Mammary epithelial cell (primary cell): ENCODE measurements at regions of chr1 and their contacts with region 1.

Region 1: GRCh38 chr1:230642263-230642959 is at the start of gene COG2:
- DNase-seq: peak; percentile 89
- H3K4me3 ChIP-seq: peak within 1 kb of the TSS; percentile 57 to 94 (median 68)
- H3K27ac ChIP-seq: peak within 1 kb of the TSS; percentile 42
- H3K4me1 ChIP-seq: peaks cover 16% of the 10 kb centered on the region
- H3K27me3 ChIP-seq: no peaks in the 10 kb centered on the region
- CTCF ChIP-seq: peak; percentile 94 to 97
- total RNA-seq, gene COG2: 16.7 to 17.7 TPM

Region 2: DNA sequence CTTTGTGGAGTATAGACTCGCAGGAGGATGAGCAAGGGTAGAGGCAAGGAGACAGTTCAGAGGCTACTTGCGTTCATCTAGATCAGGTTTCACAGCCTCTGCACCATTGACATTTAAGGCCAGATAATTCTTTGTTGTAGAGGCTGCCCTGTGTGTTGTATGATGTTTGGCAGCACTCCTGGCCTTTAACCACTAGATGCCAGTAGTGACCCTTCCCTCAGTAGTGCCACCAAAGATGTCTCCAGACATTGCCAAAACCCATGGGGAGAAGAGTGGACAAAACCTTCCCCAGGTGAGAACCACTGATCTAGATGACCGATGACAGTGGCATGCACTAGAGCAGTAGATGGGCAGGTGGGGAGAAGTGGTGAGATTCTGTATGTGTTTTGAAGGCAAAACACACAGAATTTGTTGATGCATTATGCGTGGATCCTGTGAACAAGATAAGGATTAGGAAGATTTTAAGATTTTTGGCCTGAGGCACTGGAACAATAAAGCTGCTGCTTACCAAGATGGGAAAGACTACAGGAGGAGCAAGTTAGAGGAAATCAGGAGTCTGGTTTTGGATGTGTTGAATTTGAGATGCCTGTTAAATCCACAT is 10.0 kb before region 1 on chr1:
- CTCF ChIA-PET with region 1: interaction called, 18 read pairs
- dilution Hi-C with region 1: no loop called
- in situ Hi-C with region 1: no loop called
- intact Hi-C with region 1: no loop called
- DNase-seq: peak; percentile 39
- H3K4me3 ChIP-seq: no peak overlapping the region
- H3K27ac ChIP-seq: no peak overlapping the region
- H3K4me1 ChIP-seq: peaks cover 16% of the 10 kb centered on the region
- H3K27me3 ChIP-seq: no peaks in the 10 kb centered on the region
- CTCF ChIP-seq: peak; percentile 68 to 85

Region 3: DNA sequence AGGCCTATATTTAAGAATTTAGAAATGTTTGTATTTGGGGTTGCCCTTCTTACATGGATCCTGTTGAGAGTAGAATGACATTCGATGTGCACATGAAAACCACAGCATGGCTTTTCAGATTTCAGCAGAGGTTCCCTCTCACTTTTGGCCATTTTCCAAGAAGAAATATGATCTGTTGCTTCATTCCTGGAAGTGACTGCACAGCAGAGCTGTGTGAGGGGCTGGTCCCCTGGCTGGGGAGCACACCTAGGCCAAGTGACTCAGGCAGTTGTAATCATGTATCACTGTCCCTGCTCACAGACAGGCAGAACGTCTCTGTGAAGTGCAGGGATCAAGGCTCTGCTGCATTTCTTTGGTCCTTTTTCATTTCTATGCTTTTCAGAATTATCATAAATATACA is 39.2 kb after region 1 on chr1:
- CTCF ChIA-PET with region 1: no interaction called
- dilution Hi-C with region 1: no loop called
- in situ Hi-C with region 1: no loop called
- intact Hi-C with region 1: loop called (anchors 1 kb)
- DNase-seq: peak; percentile 80
- H3K4me3 ChIP-seq: no peak overlapping the region
- H3K27ac ChIP-seq: no peak overlapping the region
- H3K4me1 ChIP-seq: peaks cover 30% of the 10 kb centered on the region
- H3K27me3 ChIP-seq: no peaks in the 10 kb centered on the region
- CTCF ChIP-seq: no peak

Region 4: GRCh38 chr1:230917284-230918135 is 275.1 kb after region 1 on chr1:
- CTCF ChIA-PET with region 1: no interaction called
- dilution Hi-C with region 1: no loop called
- in situ Hi-C with region 1: no loop called
- intact Hi-C with region 1: loop called (anchors 5 kb)
- DNase-seq: peak; percentile 44
- H3K4me3 ChIP-seq: no peak overlapping the region
- H3K27ac ChIP-seq: no peak overlapping the region
- H3K4me1 ChIP-seq: no peaks in the 10 kb centered on the region
- H3K27me3 ChIP-seq: no peaks in the 10 kb centered on the region
- CTCF ChIP-seq: peak; percentile 73 to 81

Region 5: DNA sequence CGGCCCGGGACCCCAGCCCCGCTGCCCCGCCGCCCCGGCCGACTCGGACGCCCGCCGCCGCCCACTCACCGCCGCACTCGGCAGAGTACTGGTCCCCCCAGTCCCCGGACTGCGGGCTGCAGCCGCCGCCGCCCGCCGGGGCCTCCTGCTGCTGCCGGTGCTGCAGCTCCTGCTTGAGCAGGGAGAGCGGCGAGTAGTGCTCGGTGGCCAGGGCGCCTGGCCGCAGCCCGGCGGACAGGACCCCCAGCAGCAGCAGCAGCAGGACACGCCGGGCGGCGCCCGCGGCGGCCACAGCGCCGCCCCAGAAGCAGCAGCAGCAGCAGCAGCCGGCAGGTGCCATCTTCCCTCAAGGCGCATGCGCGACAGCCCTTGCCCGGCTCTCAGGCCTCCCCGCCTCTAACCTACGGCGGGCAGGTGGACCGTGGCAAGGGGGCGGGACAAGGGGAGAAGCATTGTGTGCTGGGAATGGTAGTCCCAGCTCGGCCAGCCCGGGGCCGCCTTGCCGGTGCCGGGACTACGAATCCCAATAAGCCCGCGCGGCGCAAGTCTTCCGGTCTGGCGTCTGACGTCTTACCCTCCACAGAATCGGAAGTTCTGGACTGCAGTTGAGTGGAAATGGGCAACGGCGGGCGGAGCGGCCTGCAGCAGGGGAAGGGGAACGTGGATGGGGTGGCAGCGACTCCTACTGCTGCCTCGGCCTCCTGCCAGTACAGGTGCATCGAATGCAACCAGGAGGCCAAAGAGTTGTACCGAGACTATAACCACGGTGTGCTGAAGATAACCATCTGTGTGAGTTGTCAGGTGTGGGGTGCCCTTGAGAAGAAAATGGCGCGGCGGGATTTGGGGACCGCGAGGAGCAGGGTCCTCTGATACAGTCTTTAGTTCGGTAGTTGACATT is 336.3 kb after region 1 on chr1 and contains the starts of genes ARV1 and TTC13:
- CTCF ChIA-PET with region 1: no interaction called
- dilution Hi-C with region 1: no loop called
- in situ Hi-C with region 1: no loop called
- intact Hi-C with region 1: loop called (anchors 5 kb)
- DNase-seq: peak; percentile 99
- H3K4me3 ChIP-seq: peak within 1 kb of the TSS; percentile 70 to 84 (median 84)
- H3K27ac ChIP-seq: peak within 1 kb of the TSS; percentile 39
- H3K4me1 ChIP-seq: peaks cover 6% of the 10 kb centered on the region
- H3K27me3 ChIP-seq: no peaks in the 10 kb centered on the region
- CTCF ChIP-seq: peak; percentile 26 to 47
- total RNA-seq, gene ARV1: 14.5 to 22.4 TPM
- total RNA-seq, gene TTC13: 11.9 to 12.5 TPM

Region 6: DNA sequence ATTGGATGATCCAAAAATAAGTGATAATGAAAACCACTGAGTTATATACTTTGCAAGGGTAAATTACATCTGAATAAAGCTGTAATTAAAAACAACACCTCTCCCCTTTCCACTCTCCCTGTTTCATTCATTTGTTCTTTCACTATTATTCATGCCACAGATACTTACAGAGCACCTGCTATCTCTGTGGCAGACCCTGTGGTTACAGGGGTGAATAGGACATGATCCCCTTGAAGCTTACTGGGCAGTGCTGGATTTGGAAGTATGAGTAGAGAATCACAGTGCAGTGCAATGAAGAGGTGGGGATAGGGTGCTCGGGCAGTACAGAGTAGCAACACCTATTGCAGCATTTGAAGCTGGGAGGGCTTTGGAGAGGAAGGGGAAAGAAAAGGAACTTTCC is 358.2 kb after region 1 on chr1:
- CTCF ChIA-PET with region 1: no interaction called
- dilution Hi-C with region 1: no loop called
- in situ Hi-C with region 1: no loop called
- intact Hi-C with region 1: no loop called
- DNase-seq: no peak
- H3K4me3 ChIP-seq: no peak overlapping the region
- H3K27ac ChIP-seq: no peak overlapping the region
- H3K4me1 ChIP-seq: no peaks in the 10 kb centered on the region
- H3K27me3 ChIP-seq: no peaks in the 10 kb centered on the region
- CTCF ChIP-seq: no peak

Region 7: GRCh38 chr1:231337472-231338269 is 695.3 kb after region 1 on chr1 and contains the start of gene EXOC8:
- CTCF ChIA-PET with region 1: no interaction called
- dilution Hi-C with region 1: no loop called
- in situ Hi-C with region 1: no loop called
- intact Hi-C with region 1: loop called (anchors 10 kb)
- DNase-seq: peak; percentile 97
- H3K4me3 ChIP-seq: peak within 1 kb of the TSS; percentile 62 to 99 (median 88)
- H3K27ac ChIP-seq: peak within 1 kb of the TSS; percentile 97
- H3K4me1 ChIP-seq: peaks cover 28% of the 10 kb centered on the region
- H3K27me3 ChIP-seq: no peaks in the 10 kb centered on the region
- CTCF ChIP-seq: no peak
- total RNA-seq, gene EXOC8: 12.7 to 16.5 TPM